Endothelial cell of umbilical vein (primary cell): ENCODE measurements at regions of chr16 and their contacts with region 1.

Region 1: GRCh38 chr16:81686391-81687130 is 92.5 kb upstream of the PLCG2 start:
- DNase-seq: peak; percentile 99
- H3K4me3 ChIP-seq: no peak overlapping the region
- H3K27ac ChIP-seq: peak overlapping the region; percentile 95
- H3K4me1 ChIP-seq: peaks cover 29% of the 10 kb centered on the region
- H3K27me3 ChIP-seq: no peaks in the 10 kb centered on the region
- CTCF ChIP-seq: no peak
- POLR2A ChIP-seq: peak; percentile 80

Region 2: DNA sequence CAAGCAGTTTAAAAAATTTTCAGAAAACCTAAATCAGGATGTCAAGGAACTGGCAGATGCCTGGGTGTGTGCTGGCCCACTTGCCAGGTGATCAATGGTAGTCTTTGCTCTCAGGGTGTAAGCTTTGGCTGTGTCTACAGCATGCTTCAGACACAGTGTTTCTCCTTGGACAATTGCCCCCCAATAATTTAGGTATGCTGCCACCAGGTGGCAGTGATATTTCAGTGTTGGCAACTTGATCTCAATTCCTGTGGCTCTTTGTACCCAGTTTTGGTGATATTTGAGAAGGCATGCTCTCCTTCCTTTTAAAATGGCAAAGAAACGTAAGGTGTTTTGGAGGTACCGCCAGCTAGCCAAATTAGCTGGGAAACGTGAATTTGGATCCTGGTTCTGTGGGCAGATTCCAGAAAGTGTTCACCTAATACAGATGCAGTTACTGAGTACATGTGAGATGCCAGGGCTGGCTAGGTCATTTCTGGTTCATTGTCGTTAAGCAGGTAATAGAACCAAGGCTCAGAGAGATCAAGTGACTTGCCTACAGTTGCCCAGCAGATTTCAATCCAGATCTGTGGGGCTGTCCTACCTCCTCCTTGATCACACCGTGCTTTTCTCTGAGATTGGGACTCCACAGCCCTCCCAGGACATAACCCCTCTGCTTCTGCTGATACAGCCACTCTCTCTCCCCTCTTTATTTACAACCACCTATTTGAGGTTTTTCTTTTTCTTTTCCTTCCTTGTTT is 63.0 kb before region 1 on chr16:
- CTCF ChIA-PET with region 1: interaction called, 11 read pairs
- POLR2A ChIA-PET with region 1: no interaction called
- dilution Hi-C with region 1: no loop called
- intact Hi-C with region 1: no loop called
- DNase-seq: peak; percentile 80
- H3K4me3 ChIP-seq: no peak overlapping the region
- H3K27ac ChIP-seq: no peak overlapping the region
- H3K4me1 ChIP-seq: peaks cover 31% of the 10 kb centered on the region
- H3K27me3 ChIP-seq: no peaks in the 10 kb centered on the region
- CTCF ChIP-seq: peak; percentile 57 to 59
- POLR2A ChIP-seq: no peak

Region 3: GRCh38 chr16:81696961-81697615 is 10.5 kb after region 1 on chr16:
- CTCF ChIA-PET with region 1: interaction called, 19 read pairs
- POLR2A ChIA-PET with region 1: interaction called, 10 read pairs
- dilution Hi-C with region 1: no loop called
- intact Hi-C with region 1: loop called (anchors 1 kb)
- DNase-seq: peak; percentile 79
- H3K4me3 ChIP-seq: no peak overlapping the region
- H3K27ac ChIP-seq: peak overlapping the region; percentile 98
- H3K4me1 ChIP-seq: peaks cover 62% of the 10 kb centered on the region
- H3K27me3 ChIP-seq: no peaks in the 10 kb centered on the region
- CTCF ChIP-seq: peak; percentile 79 to 84
- POLR2A ChIP-seq: no peak

Region 4: DNA sequence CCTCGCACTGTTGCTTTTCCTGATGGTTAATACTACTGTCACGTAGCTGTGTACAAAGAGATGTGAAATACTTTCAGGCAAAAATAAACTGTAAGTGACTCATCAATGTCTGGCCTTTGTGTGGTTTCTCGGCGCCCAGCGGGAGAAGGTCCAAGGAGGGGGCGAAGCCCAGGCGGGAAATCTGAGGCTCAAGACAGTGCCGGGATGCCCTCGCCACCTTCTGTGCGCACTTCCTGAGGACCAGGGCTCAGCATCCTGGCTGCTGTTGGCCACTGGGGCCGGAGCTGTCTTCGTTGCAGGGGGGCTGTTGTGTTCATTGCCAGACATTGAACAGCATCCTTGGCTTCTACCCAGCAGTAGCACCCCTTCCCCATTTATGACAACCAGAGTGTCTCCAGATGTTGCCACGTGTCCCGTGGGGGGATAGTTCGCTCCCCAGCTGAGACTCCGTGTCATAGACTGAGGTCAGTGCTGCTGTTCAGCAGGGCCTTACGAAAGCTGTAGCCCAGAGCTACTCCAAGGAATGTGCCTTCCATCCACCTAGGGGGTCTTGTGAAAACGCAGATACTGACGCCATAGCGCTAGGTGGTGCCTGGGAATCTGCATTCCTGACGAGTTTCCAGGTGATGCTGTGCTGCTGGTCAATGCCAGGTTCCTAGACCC is 25.2 kb after region 1 on chr16:
- CTCF ChIA-PET with region 1: no interaction called
- POLR2A ChIA-PET with region 1: no interaction called
- dilution Hi-C with region 1: no loop called
- intact Hi-C with region 1: loop called (anchors 2 kb)
- DNase-seq: peak; percentile 91
- H3K4me3 ChIP-seq: no peak overlapping the region
- H3K27ac ChIP-seq: peak overlapping the region; percentile 74
- H3K4me1 ChIP-seq: peaks cover 25% of the 10 kb centered on the region
- H3K27me3 ChIP-seq: no peaks in the 10 kb centered on the region
- CTCF ChIP-seq: no peak
- POLR2A ChIP-seq: peak; percentile 8

Region 5: DNA sequence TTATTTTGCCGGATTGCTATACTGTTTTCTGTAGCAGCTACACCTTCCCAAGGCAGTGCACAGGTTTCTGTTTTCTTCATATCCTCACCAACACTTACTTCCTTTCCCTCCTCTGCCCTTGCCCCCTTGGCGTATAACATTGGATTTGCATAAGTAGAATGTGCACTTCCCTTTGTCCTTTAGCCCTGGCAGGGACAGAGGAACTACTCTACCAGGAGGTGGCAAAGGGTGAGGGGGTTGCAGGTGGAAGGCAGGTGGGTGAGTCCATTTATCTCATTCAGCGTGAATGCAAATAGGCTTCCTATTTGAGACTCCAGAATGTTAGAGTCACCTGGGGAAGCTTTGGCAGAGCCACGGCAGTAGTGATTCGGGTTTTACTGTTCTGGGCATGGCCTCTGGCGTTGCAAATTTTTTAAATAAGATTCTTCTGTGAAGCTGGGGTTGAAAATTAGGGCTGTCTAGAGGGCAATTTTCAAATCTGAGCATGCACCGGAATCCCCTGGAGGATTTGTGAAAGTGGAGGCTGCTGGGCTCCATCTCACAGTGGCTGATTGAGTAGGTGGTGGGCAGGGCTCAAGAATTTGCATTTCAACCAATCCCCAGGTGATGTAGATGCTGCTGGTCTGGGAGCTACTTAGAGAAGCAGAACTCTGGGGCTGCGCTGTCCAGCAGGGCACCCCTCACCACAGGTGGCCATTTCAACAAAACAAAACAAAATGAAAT is 177.2 kb after region 1 on chr16:
- CTCF ChIA-PET with region 1: no interaction called
- POLR2A ChIA-PET with region 1: no interaction called
- dilution Hi-C with region 1: no loop called
- intact Hi-C with region 1: loop called (anchors 2 kb)
- DNase-seq: no peak
- H3K4me3 ChIP-seq: no peak overlapping the region
- H3K27ac ChIP-seq: no peak overlapping the region
- H3K4me1 ChIP-seq: peaks cover 25% of the 10 kb centered on the region
- H3K27me3 ChIP-seq: no peaks in the 10 kb centered on the region
- CTCF ChIP-seq: no peak
- POLR2A ChIP-seq: no peak